Transverse colon (tissue), 4 donors: ENCODE measurements at regions of chr11 and their contacts with region 1.

Region 1: GRCh38 chr11:129695575-129696308 is 119.9 kb upstream of the TMEM45B start:
- DNase-seq: peak; percentile 80
- H3K4me3 ChIP-seq: peak overlapping the region in 2 of 4 donors; percentile 23 to 45
- H3K27ac ChIP-seq: no peak overlapping the region
- H3K4me1 ChIP-seq: peaks cover 0 to 6% (median 0%) of the 10 kb centered on the region in 4 donors
- H3K27me3 ChIP-seq: peaks cover 16% of the 10 kb centered on the region
- CTCF ChIP-seq: peak; percentile 48 to 82 (median 65)
- EP300 ChIP-seq: no peak
- POLR2A ChIP-seq: no peak

Region 2: GRCh38 chr11:128336203-128336602 is 1359.5 kb before region 1 on chr11:
- in situ Hi-C with region 1: no loop called
- intact Hi-C with region 1: no loop called
- DNase-seq: peak; percentile 26
- H3K4me3 ChIP-seq: no peak overlapping the region
- H3K27ac ChIP-seq: no peak overlapping the region
- H3K4me1 ChIP-seq: no peaks in the 10 kb centered on the region
- H3K27me3 ChIP-seq: no peaks in the 10 kb centered on the region
- CTCF ChIP-seq: no peak
- EP300 ChIP-seq: no peak
- POLR2A ChIP-seq: no peak

Region 3: DNA sequence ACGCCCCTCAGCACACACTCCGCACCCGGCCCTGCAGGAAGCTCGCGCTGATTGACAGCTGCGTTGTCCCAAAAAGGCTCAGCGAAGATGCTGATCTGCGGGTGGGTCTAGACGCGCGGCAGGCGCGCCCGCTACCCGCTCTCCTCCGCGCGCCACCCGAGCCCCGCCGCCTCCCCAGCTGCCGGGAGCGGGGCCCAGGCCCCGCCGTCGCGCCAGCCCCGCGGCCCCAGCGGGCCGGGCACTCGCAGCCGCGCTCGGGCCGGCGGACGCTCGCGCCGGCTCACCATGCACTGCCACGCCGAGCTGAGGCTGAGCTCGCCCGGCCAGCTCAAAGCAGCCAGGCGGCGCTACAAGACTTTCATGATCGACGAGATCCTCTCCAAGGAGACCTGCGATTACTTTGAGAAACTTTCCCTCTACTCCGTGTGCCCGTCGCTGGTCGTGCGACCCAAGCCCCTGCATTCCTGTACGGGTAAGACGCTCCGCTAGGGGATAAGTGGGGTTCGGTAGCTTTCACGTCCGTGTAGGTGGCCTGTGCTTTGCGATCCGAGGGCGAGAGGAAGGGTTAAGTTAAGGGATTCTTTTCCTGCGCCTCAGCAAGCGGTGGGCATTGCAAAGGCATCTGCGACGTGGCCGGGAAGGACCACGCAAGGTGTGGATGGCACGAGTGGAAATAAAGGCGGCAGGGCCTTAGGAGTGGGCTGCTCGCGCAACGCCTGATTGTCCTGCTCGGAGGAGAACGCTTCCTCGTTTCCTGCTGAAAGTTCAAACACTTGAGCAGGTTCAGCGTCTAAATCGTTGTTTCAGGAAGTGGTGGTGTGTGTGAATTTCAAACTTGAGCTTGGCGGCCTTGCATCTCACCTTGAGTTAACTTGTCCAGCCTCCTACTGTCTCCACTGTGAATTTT is 319.7 kb before region 1 on chr11 and contains the start of gene BARX2:
- in situ Hi-C with region 1: loop called in 2 of 4 experiments (anchors 25 kb)
- intact Hi-C with region 1: no loop called
- DNase-seq: peak; percentile 79
- H3K4me3 ChIP-seq: peak within 1 kb of the TSS; percentile 16 to 61 (median 48)
- H3K27ac ChIP-seq: peak within 1 kb of the TSS; percentile 72 to 88 (median 80)
- H3K4me1 ChIP-seq: peaks cover 5 to 38% (median 31%) of the 10 kb centered on the region in 4 donors
- H3K27me3 ChIP-seq: peaks cover 91% of the 10 kb centered on the region
- CTCF ChIP-seq: peak; percentile 26 to 62 (median 38)
- EP300 ChIP-seq: no peak
- POLR2A ChIP-seq: peak; percentile 43
- total RNA-seq, gene BARX2: 1.00 to 9.2 (median 6.3) TPM